Ascending aorta (tissue), 2 donors: ENCODE measurements at regions of chr11 and their contacts with region 1.

Region 1: GRCh38 chr11:43738590-43739409 is 58.3 kb downstream of the HSD17B12 start:
- DNase-seq: no peak
- H3K4me3 ChIP-seq: peak overlapping the region in 1 of 2 donors; percentile 31
- H3K27ac ChIP-seq: peak overlapping the region; percentile 68 to 79
- H3K4me1 ChIP-seq: peaks cover 16 to 35% of the 10 kb centered on the region in 2 donors
- H3K27me3 ChIP-seq: no peaks in the 10 kb centered on the region
- CTCF ChIP-seq: no peak

Region 2: GRCh38 chr11:43643898-43644620 is 94.7 kb before region 1 on chr11:
- intact Hi-C with region 1: loop called (anchors 5 kb)
- DNase-seq: peak; percentile 38 to 91
- H3K4me3 ChIP-seq: peak overlapping the region; percentile 66 to 70
- H3K27ac ChIP-seq: peak overlapping the region in 1 of 2 donors; percentile 26
- H3K4me1 ChIP-seq: peaks cover 4 to 5% of the 10 kb centered on the region in 2 donors
- H3K27me3 ChIP-seq: peaks cover 8% of the 10 kb centered on the region
- CTCF ChIP-seq: no peak

Region 3: DNA sequence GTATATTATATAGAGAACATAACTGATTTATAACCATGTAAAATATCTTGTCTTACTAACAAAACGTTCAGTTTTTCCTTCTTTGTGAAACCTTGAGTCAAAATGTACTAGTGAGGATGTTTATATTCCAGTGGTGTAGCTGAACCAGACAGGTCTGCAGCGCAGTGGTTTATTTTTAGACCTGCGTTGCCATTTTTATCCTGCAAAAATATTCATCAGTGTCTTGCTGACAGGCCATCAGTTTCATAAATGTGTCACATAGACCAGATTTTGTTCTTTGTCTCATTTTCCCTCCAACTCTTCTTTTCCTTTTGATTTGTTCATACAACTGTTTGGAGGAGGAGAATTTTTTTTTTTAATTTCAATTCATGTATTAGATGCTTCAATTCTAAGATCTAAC is 15.2 kb before region 1 on chr11:
- intact Hi-C with region 1: loop called (anchors 2 kb)
- DNase-seq: no peak
- H3K4me3 ChIP-seq: peak overlapping the region in 1 of 2 donors; percentile 7
- H3K27ac ChIP-seq: peak overlapping the region in 1 of 2 donors; percentile 16
- H3K4me1 ChIP-seq: peaks cover 6 to 21% of the 10 kb centered on the region in 2 donors
- H3K27me3 ChIP-seq: no peaks in the 10 kb centered on the region
- CTCF ChIP-seq: no peak

Region 4: DNA sequence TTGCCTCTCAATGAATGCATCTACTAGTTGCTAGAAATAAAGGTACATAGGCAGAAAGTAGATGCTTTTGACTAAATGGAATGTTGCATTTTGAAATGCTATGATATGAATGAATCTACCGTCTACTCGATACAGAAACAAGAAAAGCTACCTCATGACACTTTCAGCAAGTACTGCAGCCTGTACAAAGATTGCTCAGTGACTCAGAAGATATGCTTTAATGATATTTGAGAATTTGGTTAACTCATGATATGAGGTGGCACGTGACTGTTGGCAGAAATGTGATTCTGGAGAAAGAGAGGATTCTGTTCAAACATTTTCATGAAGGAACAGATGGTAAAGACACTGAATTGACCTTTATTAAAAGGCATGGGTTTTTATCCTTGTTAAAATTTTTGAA is 17.8 kb after region 1 on chr11:
- intact Hi-C with region 1: no loop called
- DNase-seq: no peak
- H3K4me3 ChIP-seq: no peak overlapping the region
- H3K27ac ChIP-seq: no peak overlapping the region
- H3K4me1 ChIP-seq: no peaks in the 10 kb centered on the region
- H3K27me3 ChIP-seq: no peaks in the 10 kb centered on the region
- CTCF ChIP-seq: no peak

Region 5: GRCh38 chr11:44911029-44911814 is 1172.4 kb after region 1 on chr11:
- intact Hi-C with region 1: no loop called
- DNase-seq: peak; percentile 51 to 94
- H3K4me3 ChIP-seq: no peak overlapping the region
- H3K27ac ChIP-seq: peak overlapping the region in 1 of 2 donors; percentile 26
- H3K4me1 ChIP-seq: peaks cover 0 to 11% of the 10 kb centered on the region in 2 donors
- H3K27me3 ChIP-seq: no peaks in the 10 kb centered on the region
- CTCF ChIP-seq: peak; percentile 77 to 85 (median 78)